ENCODE measurements at regions of chr10 and their contacts with region 1.

Region 1: GRCh38 chr10:25934621-25935139 is 651 bp downstream of the MYO3A start:
- DNase-seq: no peak
- H3K4me3 ChIP-seq: peak overlapping the region; percentile 39 to 44
- H3K27ac ChIP-seq: no peak overlapping the region
- H3K4me1 ChIP-seq: peaks cover 14% of the 10 kb centered on the region
- H3K27me3 ChIP-seq: no peaks in the 10 kb centered on the region
- CTCF ChIP-seq: peak in 1 of 3 experiments; percentile 28
- POLR2A ChIP-seq: no peak

Region 2: GRCh38 chr10:25912866-25913265 is 21.8 kb before region 1 on chr10:
- intact Hi-C with region 1: loop called (anchors 2 kb)
- DNase-seq: no peak
- H3K4me3 ChIP-seq: no peak overlapping the region
- H3K27ac ChIP-seq: no peak overlapping the region
- H3K4me1 ChIP-seq: no peaks in the 10 kb centered on the region
- H3K27me3 ChIP-seq: no peaks in the 10 kb centered on the region
- CTCF ChIP-seq: no peak
- POLR2A ChIP-seq: no peak

Region 3: GRCh38 chr10:26015092-26015491 is 80.4 kb after region 1 on chr10:
- intact Hi-C with region 1: no loop called
- DNase-seq: no peak
- H3K4me3 ChIP-seq: no peak overlapping the region
- H3K27ac ChIP-seq: no peak overlapping the region
- H3K4me1 ChIP-seq: no peaks in the 10 kb centered on the region
- H3K27me3 ChIP-seq: no peaks in the 10 kb centered on the region
- CTCF ChIP-seq: no peak
- POLR2A ChIP-seq: no peak

Measured in vagina (tissue), 2 donors.